Gastrocnemius medialis (tissue), 4 donors: ENCODE measurements at regions of chr17 and their contacts with region 1.

Region 1: DNA sequence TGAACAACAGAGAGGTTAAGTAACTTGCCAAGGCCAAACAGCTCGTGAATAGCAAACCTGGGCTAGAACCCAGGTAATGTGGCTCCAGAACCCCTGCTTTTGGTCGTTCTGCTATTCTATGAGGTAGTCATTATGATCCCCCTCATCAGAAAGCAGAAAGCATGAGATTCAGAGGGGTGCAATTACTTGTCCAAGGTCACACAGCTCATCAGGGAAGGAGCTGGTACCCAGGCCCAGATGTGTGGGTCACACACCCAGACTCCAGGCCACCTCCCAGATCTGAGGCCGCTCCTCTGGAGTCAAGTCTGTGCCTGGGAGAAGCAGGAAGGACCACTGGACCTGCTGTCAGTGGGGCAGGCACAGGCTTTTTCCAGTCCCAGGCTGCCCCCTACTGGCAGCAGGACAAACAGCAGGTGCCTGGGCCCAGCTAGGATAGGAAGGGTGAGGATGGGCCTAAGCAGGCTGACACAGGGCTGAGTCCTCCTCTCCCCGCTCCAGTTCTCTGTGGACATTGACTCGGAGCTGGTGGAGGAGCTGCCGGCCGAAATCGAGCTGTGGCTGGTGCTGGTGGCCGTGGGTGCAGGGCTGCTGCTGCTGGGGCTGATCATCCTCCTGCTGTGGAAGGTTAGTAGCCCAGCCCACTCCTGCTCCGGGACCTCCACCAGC is 7.8 kb upstream of the PDK2 start:
- DNase-seq: peak in 1 of 2 donors; percentile 71
- ATAC-seq: peak; percentile 75 to 89
- H3K4me3 ChIP-seq: no peak overlapping the region
- H3K27ac ChIP-seq: no peak overlapping the region
- H3K4me1 ChIP-seq: no peaks in the 10 kb centered on the region
- H3K27me3 ChIP-seq: no peaks in the 10 kb centered on the region
- CTCF ChIP-seq: peak; percentile 94 to 98 (median 98)
- POLR2A ChIP-seq: no peak

Region 2: DNA sequence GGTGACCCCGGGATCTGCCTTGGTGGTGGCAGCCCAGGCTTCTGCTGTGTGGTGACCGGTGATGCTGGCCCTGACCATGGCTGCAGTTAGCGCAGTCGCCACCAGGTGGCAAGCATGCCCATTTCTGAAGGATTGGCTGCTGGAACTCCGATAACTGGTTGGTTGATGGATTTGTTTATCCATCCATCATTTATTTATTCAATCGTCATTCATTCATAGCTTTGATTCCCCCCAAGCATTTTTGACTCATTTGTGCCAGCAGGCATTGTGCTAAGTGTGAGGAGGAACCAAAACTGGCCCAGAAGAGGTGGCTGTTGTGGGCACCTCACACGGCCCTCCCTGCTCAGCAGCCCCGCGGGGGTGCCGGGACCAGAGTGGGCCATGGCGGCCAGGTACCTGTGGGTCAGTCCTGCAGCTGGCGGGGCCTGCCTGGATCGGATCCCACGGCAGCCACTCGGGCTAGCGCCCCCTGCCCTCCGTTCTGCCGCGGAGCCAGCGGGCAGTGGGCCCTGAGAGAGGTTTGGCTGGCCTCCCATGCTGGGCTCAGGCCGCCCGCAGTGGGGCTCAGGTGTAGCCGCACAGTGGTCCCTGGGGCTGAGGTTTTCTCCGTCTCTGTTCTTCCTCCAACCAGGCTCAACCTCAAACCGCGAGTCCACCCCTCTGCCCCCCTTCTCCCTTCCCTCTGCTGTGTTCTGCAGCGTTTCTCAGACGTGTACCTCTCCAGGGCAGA is 60.3 kb before region 1 on chr17:
- in situ Hi-C with region 1: loop called (anchors 5 kb)
- intact Hi-C with region 1: loop called (anchors 1 kb)
- DNase-seq: peak; percentile 59 to 69
- ATAC-seq: peak; percentile 83 to 85
- H3K4me3 ChIP-seq: no peak overlapping the region
- H3K27ac ChIP-seq: no peak overlapping the region
- H3K4me1 ChIP-seq: peaks cover 0 to 5% of the 10 kb centered on the region in 2 donors
- H3K27me3 ChIP-seq: no peaks in the 10 kb centered on the region
- CTCF ChIP-seq: peak; percentile 89 to 98 (median 97)
- POLR2A ChIP-seq: no peak

Region 3: GRCh38 chr17:50037321-50038071 is 49.9 kb before region 1 on chr17:
- in situ Hi-C with region 1: no loop called
- intact Hi-C with region 1: no loop called
- DNase-seq: no peak
- ATAC-seq: no peak
- H3K4me3 ChIP-seq: no peak overlapping the region
- H3K27ac ChIP-seq: no peak overlapping the region
- H3K4me1 ChIP-seq: no peaks in the 10 kb centered on the region
- H3K27me3 ChIP-seq: no peaks in the 10 kb centered on the region
- CTCF ChIP-seq: no peak
- POLR2A ChIP-seq: no peak

Region 4: GRCh38 chr17:50133028-50133768 is 45.8 kb after region 1 on chr17:
- in situ Hi-C with region 1: no loop called
- intact Hi-C with region 1: no loop called
- DNase-seq: peak; percentile 81 to 90
- ATAC-seq: peak; percentile 89 to 93
- H3K4me3 ChIP-seq: no peak overlapping the region
- H3K27ac ChIP-seq: peak overlapping the region; percentile 89 to 95 (median 95)
- H3K4me1 ChIP-seq: peaks cover 35 to 47% of the 10 kb centered on the region in 2 donors
- H3K27me3 ChIP-seq: peaks cover 0 to 4% (median 0%) of the 10 kb centered on the region in 3 donors
- CTCF ChIP-seq: no peak
- POLR2A ChIP-seq: no peak